H1 (cell line): ENCODE measurements at regions of chr15 and their contacts with region 1.

Region 1: DNA sequence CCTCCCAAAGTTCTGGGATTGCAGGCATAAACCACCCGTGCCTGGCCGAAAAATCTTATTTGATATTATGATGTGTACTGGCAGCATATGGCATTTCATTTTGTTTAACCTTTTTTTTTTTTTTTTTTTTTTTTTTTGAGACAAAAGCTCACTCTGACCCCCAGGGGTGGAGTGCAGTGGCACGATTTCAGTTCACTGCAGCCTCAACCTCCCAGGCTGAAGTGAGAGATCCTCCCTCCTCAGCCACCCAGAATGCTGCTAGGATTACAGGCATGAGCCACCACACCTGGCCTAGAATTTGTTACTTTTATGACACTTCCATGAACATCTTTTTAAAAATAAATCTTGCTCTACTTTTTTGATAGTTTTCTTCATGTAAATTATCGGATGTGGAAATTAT is 12.0 kb downstream of the TERB2 start:
- DNase-seq: no peak
- H3K4me3 ChIP-seq: no peak overlapping the region
- H3K27ac ChIP-seq: no peak overlapping the region
- H3K4me1 ChIP-seq: no peaks in the 10 kb centered on the region
- H3K27me3 ChIP-seq: no peaks in the 10 kb centered on the region
- CTCF ChIP-seq: no peak
- EP300 ChIP-seq: no peak
- POLR2A ChIP-seq: no peak
- RAD21 ChIP-seq: no peak

Region 2: DNA sequence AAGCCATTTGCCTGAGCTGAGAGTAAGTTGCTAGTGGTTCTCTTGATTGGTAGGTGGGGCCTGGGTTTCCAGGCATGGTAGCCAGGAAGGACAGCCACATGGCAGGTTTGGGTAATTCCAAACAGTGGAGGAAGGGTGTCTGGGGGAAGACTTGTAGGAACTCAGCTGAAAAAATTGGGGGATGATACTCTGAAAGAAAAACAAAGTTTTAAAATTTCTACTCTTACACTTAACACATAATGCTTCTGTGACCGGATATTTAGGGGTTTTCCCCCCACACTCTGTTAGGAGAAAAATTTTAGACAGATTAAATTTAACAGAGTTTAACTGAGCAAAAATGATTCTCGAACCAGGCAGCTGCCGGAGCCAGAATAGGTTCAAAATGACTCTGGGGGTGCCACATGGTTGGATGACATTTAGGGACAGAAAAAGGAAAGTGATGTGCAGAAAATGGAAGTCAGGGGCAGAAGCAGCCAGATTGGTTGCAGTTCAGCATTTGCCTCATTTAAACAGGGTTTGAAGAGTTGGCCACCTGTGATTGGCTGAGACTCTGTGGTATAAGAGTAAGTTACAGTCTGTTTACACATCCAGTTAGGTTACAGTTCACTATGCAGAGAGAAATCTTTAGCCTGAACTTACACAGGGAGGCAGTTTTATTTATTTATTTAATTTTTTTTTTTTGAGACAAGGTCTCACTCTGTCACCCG is 249.0 kb before region 1 on chr15:
- CTCF ChIA-PET with region 1: no interaction called
- POLR2A ChIA-PET with region 1: no interaction called
- DNase-seq: no peak
- H3K4me3 ChIP-seq: no peak overlapping the region
- H3K27ac ChIP-seq: no peak overlapping the region
- H3K4me1 ChIP-seq: no peaks in the 10 kb centered on the region; a peak in 1 of 7 replicates
- H3K27me3 ChIP-seq: no peaks in the 10 kb centered on the region
- CTCF ChIP-seq: no peak
- EP300 ChIP-seq: no peak
- POLR2A ChIP-seq: no peak
- RAD21 ChIP-seq: no peak

Region 3: DNA sequence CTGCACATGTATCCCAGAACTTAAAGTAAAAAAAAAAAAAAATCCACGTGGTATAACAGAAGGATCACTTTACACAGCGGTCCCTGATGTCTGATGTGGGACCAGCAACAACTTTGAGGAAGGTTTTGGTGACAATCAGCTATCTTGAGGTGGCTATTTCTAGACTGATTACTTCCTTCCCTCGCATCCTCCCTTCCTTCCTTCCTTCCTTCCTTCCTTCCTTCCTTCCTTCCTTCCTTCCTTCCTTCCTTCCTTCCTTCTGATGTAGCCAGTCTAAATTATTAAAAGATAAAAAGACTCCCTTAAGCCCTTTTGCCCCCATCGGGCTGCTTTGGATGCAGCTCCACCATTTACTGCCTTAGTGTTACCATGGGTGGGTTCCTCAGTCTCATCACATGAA is 69.5 kb after region 1 on chr15:
- CTCF ChIA-PET with region 1: interaction called, 21 read pairs
- POLR2A ChIA-PET with region 1: interaction called, 3 read pairs
- DNase-seq: no peak
- H3K4me3 ChIP-seq: no peak overlapping the region
- H3K27ac ChIP-seq: no peak overlapping the region
- H3K4me1 ChIP-seq: no peaks in the 10 kb centered on the region
- H3K27me3 ChIP-seq: no peaks in the 10 kb centered on the region
- CTCF ChIP-seq: no peak
- EP300 ChIP-seq: no peak
- POLR2A ChIP-seq: no peak
- RAD21 ChIP-seq: no peak